ENCODE measurements at regions of chr16 and their contacts with region 1.

Region 1: DNA sequence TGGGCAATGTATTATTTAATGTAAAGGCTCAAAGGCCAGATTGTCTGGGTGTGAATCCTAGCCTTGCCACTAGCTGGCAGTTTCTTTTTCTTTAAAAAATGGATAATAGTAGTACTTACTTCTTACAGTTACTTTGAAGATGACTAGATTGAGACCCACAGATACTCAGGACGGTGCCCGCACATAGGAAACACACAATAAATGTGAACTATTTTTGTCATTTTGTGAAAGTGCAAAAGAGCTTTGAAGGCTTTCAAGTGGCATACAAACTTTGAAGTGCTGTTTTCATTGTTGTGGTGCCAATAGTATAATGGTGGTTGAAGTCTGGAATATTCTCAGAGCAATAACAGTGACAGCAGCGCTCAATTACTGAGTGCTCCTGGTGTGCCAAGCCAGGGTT is 63.6 kb downstream of the OTOA start:
- DNase-seq: no peak
- ATAC-seq: no peak
- H3K4me3 ChIP-seq: no peak overlapping the region
- H3K27ac ChIP-seq: no peak overlapping the region
- H3K4me1 ChIP-seq: no peaks in the 10 kb centered on the region
- H3K27me3 ChIP-seq: peaks cover 2% of the 10 kb centered on the region
- CTCF ChIP-seq: no peak
- POLR2A ChIP-seq: no peak
- RAD21 ChIP-seq: no peak

Region 2: GRCh38 chr16:21599233-21600030 is 127.9 kb before region 1 on chr16 and contains the start of gene METTL9:
- CTCF ChIA-PET with region 1: no interaction called
- POLR2A ChIA-PET with region 1: no interaction called
- dilution Hi-C with region 1: no loop called
- in situ Hi-C with region 1: no loop called
- intact Hi-C with region 1: no loop called
- DNase-seq: peak; percentile 93
- ATAC-seq: peak; percentile 96
- H3K4me3 ChIP-seq: peak within 1 kb of the TSS; percentile 61
- H3K27ac ChIP-seq: peak within 1 kb of the TSS; percentile 85
- H3K4me1 ChIP-seq: no peaks in the 10 kb centered on the region; the same call in 1 of the 2 replicates
- H3K27me3 ChIP-seq: no peaks in the 10 kb centered on the region
- CTCF ChIP-seq: no peak
- POLR2A ChIP-seq: peak; percentile 74
- RAD21 ChIP-seq: no peak
- total RNA-seq, gene METTL9: 95.5 and 95.8 TPM in 2 replicates

Region 3: GRCh38 chr16:21656795-21657768 is 70.3 kb before region 1 on chr16:
- CTCF ChIA-PET with region 1: no interaction called
- POLR2A ChIA-PET with region 1: no interaction called
- dilution Hi-C with region 1: no loop called
- in situ Hi-C with region 1: no loop called
- intact Hi-C with region 1: no loop called
- DNase-seq: peak; percentile 67
- ATAC-seq: peak; percentile 68
- H3K4me3 ChIP-seq: no peak overlapping the region
- H3K27ac ChIP-seq: no peak overlapping the region
- H3K4me1 ChIP-seq: no peaks in the 10 kb centered on the region; the same call in 1 of the 2 replicates
- H3K27me3 ChIP-seq: no peaks in the 10 kb centered on the region
- CTCF ChIP-seq: peak; percentile 82
- POLR2A ChIP-seq: no peak
- RAD21 ChIP-seq: peak; percentile 71

Region 4: GRCh38 chr16:21673469-21673868 is 53.9 kb before region 1 on chr16:
- CTCF ChIA-PET with region 1: no interaction called
- POLR2A ChIA-PET with region 1: no interaction called
- dilution Hi-C with region 1: no loop called
- in situ Hi-C with region 1: loop called (anchors 10 kb)
- intact Hi-C with region 1: no loop called
- DNase-seq: no peak
- ATAC-seq: no peak
- H3K4me3 ChIP-seq: no peak overlapping the region
- H3K27ac ChIP-seq: no peak overlapping the region
- H3K4me1 ChIP-seq: no peaks in the 10 kb centered on the region
- H3K27me3 ChIP-seq: peaks cover 9% of the 10 kb centered on the region
- CTCF ChIP-seq: no peak
- POLR2A ChIP-seq: no peak
- RAD21 ChIP-seq: no peak